Heart right ventricle (tissue), 16 donors: ENCODE measurements at regions of chr20 and their contacts with region 1.

Region 1: GRCh38 chr20:10553326-10553984 is 118.3 kb downstream of the SLX4IP start:
- DNase-seq: peak; percentile 55 to 77
- ATAC-seq: peak in 7 of 8 donors; percentile 45 to 79 (median 73)
- H3K4me3 ChIP-seq: no peak overlapping the region
- H3K27ac ChIP-seq: no peak overlapping the region
- H3K4me1 ChIP-seq: peaks cover 0 to 38% (median 14%) of the 10 kb centered on the region in 9 donors
- H3K27me3 ChIP-seq: no peaks in the 10 kb centered on the region
- CTCF ChIP-seq: peak; percentile 65 to 90 (median 82)

Region 2: DNA sequence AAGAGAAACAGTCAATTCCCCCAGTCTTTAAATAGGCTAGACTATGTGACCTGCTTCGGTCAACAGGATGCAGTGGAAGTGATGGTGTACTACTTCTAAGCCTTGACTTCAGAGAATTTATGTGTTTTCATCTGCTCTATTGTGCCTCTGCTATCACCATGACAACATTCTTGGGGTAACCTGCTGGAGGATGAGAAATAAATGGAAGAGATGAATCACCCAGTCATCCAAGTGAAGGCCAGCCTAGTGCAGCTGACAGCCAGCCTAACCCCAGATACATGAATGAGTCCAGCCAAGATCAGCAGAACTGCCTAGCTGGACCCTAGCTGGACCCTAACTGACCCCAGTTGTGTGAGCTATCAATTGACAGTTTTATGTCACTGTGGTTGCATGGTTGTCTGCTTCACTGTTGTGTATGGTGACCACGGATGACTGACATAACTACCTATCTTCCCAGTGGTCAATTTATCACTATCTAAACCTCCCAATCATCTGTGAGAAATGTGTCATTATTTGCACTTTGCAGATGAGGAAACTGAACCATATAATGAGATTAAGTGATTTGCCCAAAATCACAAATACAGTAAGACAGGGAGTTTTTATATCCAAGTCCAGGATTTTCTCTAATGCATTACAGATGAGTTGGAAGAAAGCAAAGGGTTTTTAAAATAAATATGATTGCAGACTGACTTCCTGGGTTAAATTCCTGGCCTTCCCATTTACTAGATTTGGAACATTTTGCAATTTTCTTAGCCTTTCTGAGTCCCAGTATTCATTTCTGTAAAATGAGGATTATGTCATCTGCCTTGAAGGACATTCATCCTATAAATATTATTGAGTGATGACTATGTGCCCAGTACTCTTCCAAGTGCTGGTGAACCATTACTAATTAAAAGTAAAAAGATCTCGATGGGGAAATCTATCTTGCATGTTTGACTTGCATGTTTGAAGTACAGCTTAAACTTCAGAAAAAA is 1621.0 kb before region 1 on chr20:
- intact Hi-C with region 1: no loop called
- DNase-seq: peak in 1 of 2 donors; percentile 12
- ATAC-seq: peak in 7 of 8 donors; percentile 15 to 65 (median 46)
- H3K4me3 ChIP-seq: no peak overlapping the region
- H3K27ac ChIP-seq: peak overlapping the region in 8 of 10 donors; percentile 4 to 71 (median 50)
- H3K4me1 ChIP-seq: peaks cover 0 to 30% (median 8%) of the 10 kb centered on the region in 9 donors
- H3K27me3 ChIP-seq: no peaks in the 10 kb centered on the region
- CTCF ChIP-seq: no peak

Region 3: DNA sequence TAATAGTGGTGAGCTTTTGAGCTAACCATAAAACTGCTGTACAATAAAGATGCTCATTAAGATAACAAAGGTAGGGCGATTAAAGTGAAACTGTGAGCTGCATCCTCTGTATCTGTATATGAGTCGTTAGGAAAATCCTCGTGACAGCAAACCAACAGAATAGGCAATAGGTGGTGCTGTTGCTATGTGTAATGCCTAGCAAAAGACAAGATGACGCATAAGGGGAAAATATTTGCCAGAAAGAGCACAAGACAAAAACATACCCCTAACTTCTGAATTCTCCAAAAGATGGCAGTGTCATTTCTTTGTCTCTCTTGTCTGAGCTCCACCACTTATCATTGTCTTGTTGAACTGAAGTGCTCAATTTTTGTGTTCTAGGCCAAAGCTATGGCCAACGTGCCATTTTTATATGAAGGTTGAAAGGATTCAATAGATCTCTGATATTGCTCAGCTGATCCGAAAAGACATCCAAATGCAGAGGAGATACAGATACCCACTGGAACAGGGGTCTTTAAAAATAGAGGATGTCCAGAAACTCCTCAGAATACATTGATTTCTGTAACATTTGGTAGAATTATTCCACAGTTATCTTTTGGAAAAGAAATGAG is 575.0 kb before region 1 on chr20:
- intact Hi-C with region 1: loop called in 1 of 10 experiments (anchors 5 kb)
- DNase-seq: peak in 1 of 2 donors; percentile 64
- ATAC-seq: peak in 7 of 8 donors; percentile 80 to 93 (median 83)
- H3K4me3 ChIP-seq: no peak overlapping the region
- H3K27ac ChIP-seq: no peak overlapping the region
- H3K4me1 ChIP-seq: peaks cover 0 to 6% (median 0%) of the 10 kb centered on the region in 9 donors
- H3K27me3 ChIP-seq: peaks cover 0 to 7% (median 0%) of the 10 kb centered on the region in 7 donors
- CTCF ChIP-seq: peak; percentile 53 to 94 (median 79)

Region 4: GRCh38 chr20:10654630-10655029 is 101.2 kb after region 1 on chr20:
- intact Hi-C with region 1: loop called in 1 of 10 experiments (anchors 5 kb)
- DNase-seq: no peak
- ATAC-seq: peak in 4 of 8 donors; percentile 17 to 29 (median 22)
- H3K4me3 ChIP-seq: no peak overlapping the region
- H3K27ac ChIP-seq: peak overlapping the region in 8 of 10 donors; percentile 45 to 84 (median 72)
- H3K4me1 ChIP-seq: peaks cover 24 to 100% (median 81%) of the 10 kb centered on the region in 9 donors
- H3K27me3 ChIP-seq: no peaks in the 10 kb centered on the region
- CTCF ChIP-seq: no peak

Region 5: DNA sequence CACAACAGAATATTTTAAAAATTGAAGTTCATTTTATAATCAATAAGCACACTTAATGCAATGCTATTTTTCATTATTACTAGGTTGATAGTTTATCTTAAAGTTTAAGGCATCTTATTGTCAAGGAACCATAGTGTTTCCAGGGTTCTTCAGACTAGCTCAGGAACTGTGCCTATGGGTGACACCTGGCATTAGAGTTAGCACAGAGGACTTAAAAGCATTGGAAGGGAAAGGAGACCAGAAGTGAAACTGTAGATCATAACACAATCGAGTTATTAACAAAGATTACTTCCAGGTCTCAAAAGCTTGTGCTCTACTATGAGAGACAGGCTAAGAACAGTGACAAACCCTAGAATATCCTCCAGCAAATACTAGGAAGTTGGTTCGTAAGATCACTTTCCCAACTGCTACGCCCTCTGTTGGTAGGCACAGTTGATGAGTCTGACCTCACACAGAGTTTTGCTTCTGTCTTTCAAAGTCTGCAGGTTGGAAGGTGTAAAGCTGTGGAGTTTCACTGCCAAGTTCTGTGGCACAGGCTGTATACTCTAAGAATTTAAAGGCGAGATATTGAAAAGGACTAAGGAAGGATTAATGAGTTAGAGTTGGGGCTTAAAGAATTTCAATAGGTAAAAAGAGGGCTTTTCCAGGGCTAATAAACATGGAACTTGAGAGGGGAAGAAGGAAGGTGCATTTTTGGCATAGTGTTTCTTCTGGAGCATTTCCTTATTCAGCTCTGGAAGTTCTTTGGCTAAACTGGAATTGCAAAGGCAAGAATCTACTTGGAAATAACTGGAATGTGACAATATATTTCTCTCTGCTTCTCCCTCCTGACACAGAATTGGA is 651.7 kb after region 1 on chr20:
- intact Hi-C with region 1: loop called in 6 of 10 experiments (anchors 5 to 10 kb)
- DNase-seq: peak; percentile 19 to 79
- ATAC-seq: peak; percentile 91 to 98 (median 95)
- H3K4me3 ChIP-seq: no peak overlapping the region
- H3K27ac ChIP-seq: peak overlapping the region in 5 of 10 donors; percentile 2 to 61 (median 33)
- H3K4me1 ChIP-seq: peaks cover 0 to 15% (median 7%) of the 10 kb centered on the region in 9 donors
- H3K27me3 ChIP-seq: no peaks in the 10 kb centered on the region
- CTCF ChIP-seq: peak; percentile 65 to 91 (median 85)

Region 6: DNA sequence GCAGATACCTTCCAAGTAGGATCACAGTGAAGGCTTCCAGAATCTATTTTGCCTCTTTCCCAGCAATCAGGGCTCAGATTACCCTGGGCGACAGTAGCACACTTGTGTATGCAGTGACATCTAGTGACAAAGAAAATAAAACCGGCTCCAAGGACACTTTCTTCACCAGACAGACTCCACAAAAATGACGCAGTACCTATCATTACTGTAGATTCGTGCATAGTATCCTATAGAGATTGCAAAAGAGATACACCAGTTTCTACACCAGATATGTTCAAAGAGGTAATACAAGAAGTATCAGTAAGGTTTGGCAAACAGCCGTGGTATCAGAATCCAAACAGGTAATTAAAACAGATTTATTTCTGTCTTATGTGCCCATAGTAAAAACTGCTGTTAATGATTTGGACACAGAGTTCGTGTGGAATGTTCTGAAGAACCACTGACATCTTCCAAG is 720.7 kb after region 1 on chr20:
- intact Hi-C with region 1: loop called (anchors 1 to 5 kb)
- DNase-seq: peak in 1 of 2 donors; percentile 45
- ATAC-seq: peak; percentile 69 to 95 (median 92)
- H3K4me3 ChIP-seq: no peak overlapping the region
- H3K27ac ChIP-seq: no peak overlapping the region
- H3K4me1 ChIP-seq: peaks cover 0 to 9% (median 5%) of the 10 kb centered on the region in 9 donors
- H3K27me3 ChIP-seq: no peaks in the 10 kb centered on the region
- CTCF ChIP-seq: peak; percentile 51 to 86 (median 73)